Activated naive CD4-positive, alpha-beta T cell treated with anti-CD3 and anti-CD28 coated beads for 36 hours (primary cell): ENCODE measurements at regions of chr5 and their contacts with region 1.

Region 1: GRCh38 chr5:132190161-132190817 is 37.4 kb downstream of the P4HA2 start:
- DNase-seq: no peak
- H3K4me3 Mint-ChIP-seq: no peak overlapping the region
- H3K27ac Mint-ChIP-seq: no peak overlapping the region
- H3K4me1 Mint-ChIP-seq: no peaks in the 10 kb centered on the region
- H3K27me3 Mint-ChIP-seq: peaks cover 5% of the 10 kb centered on the region

Region 2: DNA sequence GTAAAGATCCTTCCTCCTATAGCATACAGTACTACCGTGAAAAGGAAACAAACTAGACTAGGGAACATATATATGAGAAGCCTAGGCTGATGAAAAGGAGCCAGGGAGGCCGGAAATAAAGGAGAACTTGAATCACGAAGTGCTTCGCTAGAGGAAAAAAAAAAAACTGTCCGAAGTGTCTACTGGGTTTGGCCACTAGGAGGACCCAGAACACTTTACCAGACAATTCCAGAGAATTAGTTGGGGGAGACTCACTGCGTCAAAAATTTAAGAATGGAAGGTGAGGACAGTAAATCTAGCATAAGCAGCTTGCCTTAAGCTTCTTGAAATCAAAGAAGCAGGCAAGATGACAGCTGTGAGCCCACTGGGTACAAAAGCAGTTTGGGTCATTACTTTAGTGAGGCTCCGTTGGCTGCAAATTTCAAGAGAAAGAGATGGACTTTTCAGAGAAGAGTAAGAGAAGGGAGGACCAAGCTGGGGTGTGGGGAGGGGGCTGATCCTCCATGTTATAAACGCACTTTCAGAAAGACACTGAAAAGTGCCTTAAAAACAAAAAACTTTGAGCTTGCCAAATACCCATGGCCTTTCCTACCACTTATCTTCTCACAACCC is 10.0 kb before region 1 on chr5:
- CTCF ChIA-PET with region 1: interaction called, 15 read pairs
- intact Hi-C with region 1: no loop called
- DNase-seq: peak; percentile 27
- H3K4me3 Mint-ChIP-seq: no peak overlapping the region
- H3K27ac Mint-ChIP-seq: no peak overlapping the region
- H3K4me1 Mint-ChIP-seq: peaks cover 24% of the 10 kb centered on the region
- H3K27me3 Mint-ChIP-seq: no peaks in the 10 kb centered on the region

Region 3: DNA sequence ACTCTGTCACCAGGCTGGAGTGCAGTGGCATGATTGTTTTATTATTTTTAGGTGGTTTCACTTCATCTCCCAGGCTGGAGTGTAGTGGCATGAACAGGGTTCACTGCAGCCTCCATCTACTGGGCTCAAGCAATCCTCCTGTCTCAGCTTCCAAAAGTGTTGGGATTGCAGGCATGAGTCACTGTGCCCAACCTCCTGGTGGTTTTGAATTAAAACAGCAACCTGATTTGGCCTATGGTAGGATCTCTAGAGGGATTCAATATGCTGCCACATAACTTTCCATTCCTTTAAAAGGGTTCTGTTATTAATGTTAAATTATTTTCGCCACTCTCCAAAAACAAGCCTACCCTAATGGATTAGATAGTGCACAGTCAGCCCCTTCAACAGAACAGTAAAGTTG is 851.6 kb after region 1 on chr5:
- CTCF ChIA-PET with region 1: no interaction called
- intact Hi-C with region 1: no loop called
- DNase-seq: no peak
- H3K4me3 Mint-ChIP-seq: no peak overlapping the region
- H3K27ac Mint-ChIP-seq: no peak overlapping the region
- H3K4me1 Mint-ChIP-seq: peaks cover 2% of the 10 kb centered on the region
- H3K27me3 Mint-ChIP-seq: no peaks in the 10 kb centered on the region